Activated naive CD4-positive, alpha-beta T cell treated with anti-CD3 and anti-CD28 coated beads for 36 hours (primary cell): ENCODE measurements at regions of chr7 and their contacts with region 1.

Region 1: GRCh38 chr7:26151953-26152781 is at the start of gene NFE2L3:
- DNase-seq: peak; percentile 86
- H3K4me3 Mint-ChIP-seq: peak within 1 kb of the TSS; percentile 95
- H3K27ac Mint-ChIP-seq: peak within 1 kb of the TSS; percentile 98
- H3K4me1 Mint-ChIP-seq: peaks cover 50% of the 10 kb centered on the region
- H3K27me3 Mint-ChIP-seq: no peaks in the 10 kb centered on the region
- total RNA-seq, gene NFE2L3: 12.5 to 12.9 TPM

Region 2: GRCh38 chr7:25862260-25863037 is 289.7 kb before region 1 on chr7:
- CTCF ChIA-PET with region 1: no interaction called
- intact Hi-C with region 1: loop called (anchors 1 kb)
- DNase-seq: peak; percentile 99
- H3K4me3 Mint-ChIP-seq: peak overlapping the region; percentile 58
- H3K27ac Mint-ChIP-seq: peak overlapping the region; percentile 38
- H3K4me1 Mint-ChIP-seq: peaks cover 22% of the 10 kb centered on the region
- H3K27me3 Mint-ChIP-seq: peaks cover 70% of the 10 kb centered on the region

Region 3: DNA sequence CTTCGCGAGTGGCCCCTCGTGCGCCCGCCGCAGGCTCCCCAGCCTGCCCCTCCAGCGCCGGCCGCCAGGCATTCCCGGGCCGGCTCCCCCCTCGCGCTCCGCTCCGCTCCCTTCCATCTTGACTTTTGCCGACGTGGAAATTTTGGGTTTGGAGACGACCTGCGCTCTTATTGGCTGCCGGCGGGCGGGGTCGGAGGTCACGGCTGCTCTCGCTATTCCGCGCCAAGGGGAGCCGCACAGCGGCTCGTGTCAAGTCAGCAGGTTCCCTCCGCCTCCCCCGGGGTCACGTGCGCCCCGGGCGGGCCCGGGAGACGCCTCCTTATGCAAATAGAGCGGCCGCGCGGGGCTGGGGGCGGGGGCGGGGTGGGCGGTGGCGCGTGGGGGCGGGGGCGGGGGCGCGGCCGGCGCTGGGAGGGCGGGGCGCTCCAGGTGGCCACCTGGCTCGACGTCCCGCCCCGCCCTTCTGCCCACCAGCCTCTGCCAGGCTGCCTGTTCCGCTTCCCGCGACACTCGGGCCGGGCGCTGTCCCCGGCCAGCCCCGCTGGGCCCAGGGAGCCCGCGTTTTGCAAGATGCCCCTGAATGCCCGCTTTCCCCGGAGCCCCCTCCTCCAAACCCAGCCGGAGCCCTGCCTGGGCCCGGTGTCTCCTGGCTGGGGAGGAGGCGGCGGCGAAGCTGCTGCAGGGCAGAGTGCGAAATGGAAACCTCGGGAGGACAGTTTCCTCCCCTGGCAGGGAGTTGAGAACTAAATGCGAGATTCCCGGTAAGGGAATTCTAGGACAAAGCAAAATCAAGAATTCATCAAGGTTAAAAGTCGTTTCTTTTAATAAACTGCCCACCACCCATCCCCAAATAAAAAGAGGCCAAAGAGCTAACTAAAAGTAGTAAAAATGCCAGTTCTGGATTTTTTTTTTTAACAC is 200.9 kb before region 1 on chr7:
- CTCF ChIA-PET with region 1: no interaction called
- intact Hi-C with region 1: loop called (anchors 1 kb)
- DNase-seq: peak; percentile 91
- H3K4me3 Mint-ChIP-seq: peak overlapping the region; percentile 88
- H3K27ac Mint-ChIP-seq: no peak overlapping the region
- H3K4me1 Mint-ChIP-seq: peaks cover 16% of the 10 kb centered on the region
- H3K27me3 Mint-ChIP-seq: peaks cover 7% of the 10 kb centered on the region

Region 4: GRCh38 chr7:26061688-26062150 is 90.4 kb before region 1 on chr7:
- CTCF ChIA-PET with region 1: no interaction called
- intact Hi-C with region 1: no loop called
- DNase-seq: peak; percentile 86
- H3K4me3 Mint-ChIP-seq: no peak overlapping the region
- H3K27ac Mint-ChIP-seq: no peak overlapping the region
- H3K4me1 Mint-ChIP-seq: peaks cover 9% of the 10 kb centered on the region
- H3K27me3 Mint-ChIP-seq: peaks cover 12% of the 10 kb centered on the region

Region 5: GRCh38 chr7:26097852-26098668 is 54.1 kb before region 1 on chr7:
- CTCF ChIA-PET with region 1: interaction called, 5 read pairs
- intact Hi-C with region 1: loop called (anchors 2 kb)
- DNase-seq: no peak
- H3K4me3 Mint-ChIP-seq: peak overlapping the region; percentile 57
- H3K27ac Mint-ChIP-seq: peak overlapping the region; percentile 91
- H3K4me1 Mint-ChIP-seq: peaks cover 53% of the 10 kb centered on the region
- H3K27me3 Mint-ChIP-seq: no peaks in the 10 kb centered on the region

Region 6: GRCh38 chr7:26167301-26167934 is 15.3 kb after region 1 on chr7:
- CTCF ChIA-PET with region 1: interaction called, 15 read pairs
- intact Hi-C with region 1: loop called (anchors 1 kb)
- DNase-seq: peak; percentile 79
- H3K4me3 Mint-ChIP-seq: peak overlapping the region; percentile 23
- H3K27ac Mint-ChIP-seq: peak overlapping the region; percentile 94
- H3K4me1 Mint-ChIP-seq: peaks cover 40% of the 10 kb centered on the region
- H3K27me3 Mint-ChIP-seq: no peaks in the 10 kb centered on the region

Region 7: GRCh38 chr7:26187380-26188205 is 35.4 kb after region 1 on chr7:
- CTCF ChIA-PET with region 1: interaction called, 15 read pairs
- intact Hi-C with region 1: loop called (anchors 1 kb)
- DNase-seq: peak; percentile 47
- H3K4me3 Mint-ChIP-seq: no peak overlapping the region
- H3K27ac Mint-ChIP-seq: peak overlapping the region; percentile 85
- H3K4me1 Mint-ChIP-seq: peaks cover 75% of the 10 kb centered on the region
- H3K27me3 Mint-ChIP-seq: no peaks in the 10 kb centered on the region

Region 8: DNA sequence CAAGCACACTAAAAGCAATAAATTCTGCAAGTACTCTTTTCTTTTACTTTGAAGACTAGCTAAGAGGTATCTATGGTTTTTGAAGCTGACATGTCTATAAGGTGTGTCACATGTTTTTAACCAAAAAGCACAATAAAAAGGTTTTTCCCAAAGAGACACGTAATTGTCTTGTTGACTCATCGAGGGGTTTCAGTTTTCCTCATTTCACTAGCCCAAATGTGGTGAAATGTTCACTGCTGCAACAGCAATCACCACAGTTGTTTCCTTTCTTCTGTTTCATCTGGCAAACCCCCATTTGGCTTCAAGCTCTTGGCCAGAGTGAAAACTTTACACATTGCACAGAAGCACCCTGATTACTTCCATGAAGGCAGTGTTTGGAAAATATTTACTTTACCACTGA is 982.2 kb after region 1 on chr7:
- CTCF ChIA-PET with region 1: no interaction called
- intact Hi-C with region 1: loop called (anchors 2 kb)
- DNase-seq: peak; percentile 64
- H3K4me3 Mint-ChIP-seq: no peak overlapping the region
- H3K27ac Mint-ChIP-seq: peak overlapping the region; percentile 51
- H3K4me1 Mint-ChIP-seq: peaks cover 19% of the 10 kb centered on the region
- H3K27me3 Mint-ChIP-seq: peaks cover 54% of the 10 kb centered on the region